PC-9 (cell line): ENCODE measurements at regions of chr11 and their contacts with region 1.

Region 1: DNA sequence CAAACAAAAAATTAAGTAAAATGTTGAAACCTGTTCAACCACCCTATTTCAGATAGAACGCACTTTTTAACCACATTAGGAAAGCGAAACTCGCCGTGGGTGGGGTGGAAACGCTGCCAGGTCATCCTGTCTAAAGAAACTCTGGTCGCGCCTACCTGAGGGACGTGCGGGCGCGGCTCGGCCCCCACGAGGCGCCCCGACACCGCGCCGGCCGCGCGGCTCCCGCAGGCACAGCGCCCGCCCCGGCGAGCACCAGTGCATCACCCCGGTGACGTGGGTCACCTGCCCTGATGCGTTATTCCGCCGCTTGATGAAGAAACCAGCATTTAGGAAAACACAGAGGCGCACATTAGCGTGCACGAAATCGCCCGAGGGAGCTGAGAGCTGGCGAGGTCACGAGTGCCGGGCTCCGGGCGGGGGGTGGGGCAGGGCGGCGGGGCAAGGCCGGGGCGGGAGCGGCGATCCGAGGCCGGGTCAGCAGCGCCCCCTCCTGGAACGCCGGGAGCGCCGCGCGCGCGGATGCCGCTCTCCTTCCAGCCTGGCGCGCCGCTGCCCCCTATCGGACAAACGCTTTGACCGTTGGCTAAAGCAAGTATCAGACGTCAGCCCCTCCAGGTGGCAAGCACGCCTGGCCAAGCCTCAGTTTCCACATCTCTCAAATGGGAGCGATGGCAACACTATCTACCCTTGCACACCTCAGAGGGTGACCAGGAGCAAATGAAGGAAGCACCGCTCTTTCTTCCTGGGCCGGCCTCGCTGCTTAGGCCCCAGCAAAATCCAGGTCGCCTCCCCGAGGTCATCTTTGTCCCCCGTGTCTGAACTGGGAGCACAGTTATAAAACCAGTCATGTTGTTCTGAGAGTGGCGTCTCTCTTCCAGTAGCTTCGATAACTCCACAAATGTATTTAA is 15.7 kb upstream of the SNX32 start:
- DNase-seq: peak; percentile 71 to 95
- H3K4me3 ChIP-seq: peak overlapping the region; percentile 70
- H3K27ac ChIP-seq: peak overlapping the region; percentile 55
- H3K4me1 ChIP-seq: peaks cover 8% of the 10 kb centered on the region; the same call in 1 of the 2 replicates
- H3K27me3 ChIP-seq: no peaks in the 10 kb centered on the region
- CTCF ChIP-seq: peak; percentile 96

Region 2: GRCh38 chr11:65606876-65607613 is 211.0 kb before region 1 on chr11:
- CTCF ChIA-PET with region 1: no interaction called
- POLR2A ChIA-PET with region 1: no interaction called
- intact Hi-C with region 1: no loop called
- DNase-seq: no peak
- H3K4me3 ChIP-seq: no peak overlapping the region
- H3K27ac ChIP-seq: no peak overlapping the region
- H3K4me1 ChIP-seq: peaks cover 2% of the 10 kb centered on the region; the same call in 1 of the 2 replicates
- H3K27me3 ChIP-seq: no peaks in the 10 kb centered on the region
- CTCF ChIP-seq: no peak

Region 3: GRCh38 chr11:65662799-65663638 is 155.1 kb before region 1 on chr11 and contains the start of gene RELA:
- CTCF ChIA-PET with region 1: no interaction called
- POLR2A ChIA-PET with region 1: interaction called, 10 read pairs
- intact Hi-C with region 1: no loop called
- DNase-seq: peak; percentile 76 to 98
- H3K4me3 ChIP-seq: peak within 1 kb of the TSS; percentile 99
- H3K27ac ChIP-seq: peak within 1 kb of the TSS; percentile 80
- H3K4me1 ChIP-seq: peaks cover 20% of the 10 kb centered on the region
- H3K27me3 ChIP-seq: no peaks in the 10 kb centered on the region
- CTCF ChIP-seq: no peak
- total RNA-seq, gene RELA: 59.5 and 86.8 TPM in 2 replicates

Region 4: GRCh38 chr11:65773784-65774411 is 44.2 kb before region 1 on chr11:
- CTCF ChIA-PET with region 1: interaction called, 16 read pairs
- POLR2A ChIA-PET with region 1: no interaction called
- intact Hi-C with region 1: no loop called
- DNase-seq: no peak
- H3K4me3 ChIP-seq: no peak overlapping the region
- H3K27ac ChIP-seq: no peak overlapping the region
- H3K4me1 ChIP-seq: peaks cover 32% of the 10 kb centered on the region
- H3K27me3 ChIP-seq: no peaks in the 10 kb centered on the region
- CTCF ChIP-seq: no peak

Region 5: DNA sequence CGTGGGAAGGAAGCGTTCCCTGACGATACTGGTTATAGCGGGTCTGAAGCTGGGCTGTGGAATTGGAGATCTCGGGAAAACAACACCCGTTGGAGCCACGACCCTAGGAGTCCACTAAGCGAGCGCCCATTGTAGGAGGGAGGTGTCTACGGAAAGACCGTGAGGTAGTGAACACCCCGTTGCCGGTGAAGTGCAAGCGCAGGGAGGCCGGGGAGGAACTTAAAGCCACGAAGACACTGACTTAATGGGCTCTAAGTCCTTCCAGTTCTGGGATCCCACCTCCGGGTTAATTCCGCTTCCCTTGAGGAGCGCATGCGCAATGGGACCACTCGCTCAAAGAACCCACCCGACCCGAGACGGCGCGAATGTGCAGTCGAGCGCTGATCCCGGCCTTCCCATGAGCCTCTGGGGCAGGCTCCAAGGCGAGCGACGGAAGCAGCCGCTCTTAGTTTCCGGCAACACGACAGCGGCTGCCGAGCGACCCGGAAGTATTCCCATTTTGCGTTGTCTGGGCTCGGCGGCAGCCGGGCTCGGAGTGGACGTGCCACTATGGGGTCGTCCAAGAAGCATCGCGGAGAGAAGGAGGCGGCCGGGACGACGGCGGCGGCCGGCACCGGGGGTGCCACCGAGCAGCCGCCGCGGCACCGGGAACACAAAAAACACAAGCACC is 143.3 kb after region 1 on chr11 and contains the start of gene SART1:
- CTCF ChIA-PET with region 1: no interaction called
- POLR2A ChIA-PET with region 1: interaction called, 10 read pairs
- intact Hi-C with region 1: no loop called
- DNase-seq: peak; percentile 94 to 97
- H3K4me3 ChIP-seq: peak within 1 kb of the TSS; percentile 71
- H3K27ac ChIP-seq: peak within 1 kb of the TSS; percentile 63
- H3K4me1 ChIP-seq: peaks cover 13% of the 10 kb centered on the region
- H3K27me3 ChIP-seq: no peaks in the 10 kb centered on the region
- CTCF ChIP-seq: no peak
- total RNA-seq, gene SART1: 74.6 and 78.8 TPM in 2 replicates